ENCODE measurements at regions of chr18 and their contacts with region 1.

Region 1: DNA sequence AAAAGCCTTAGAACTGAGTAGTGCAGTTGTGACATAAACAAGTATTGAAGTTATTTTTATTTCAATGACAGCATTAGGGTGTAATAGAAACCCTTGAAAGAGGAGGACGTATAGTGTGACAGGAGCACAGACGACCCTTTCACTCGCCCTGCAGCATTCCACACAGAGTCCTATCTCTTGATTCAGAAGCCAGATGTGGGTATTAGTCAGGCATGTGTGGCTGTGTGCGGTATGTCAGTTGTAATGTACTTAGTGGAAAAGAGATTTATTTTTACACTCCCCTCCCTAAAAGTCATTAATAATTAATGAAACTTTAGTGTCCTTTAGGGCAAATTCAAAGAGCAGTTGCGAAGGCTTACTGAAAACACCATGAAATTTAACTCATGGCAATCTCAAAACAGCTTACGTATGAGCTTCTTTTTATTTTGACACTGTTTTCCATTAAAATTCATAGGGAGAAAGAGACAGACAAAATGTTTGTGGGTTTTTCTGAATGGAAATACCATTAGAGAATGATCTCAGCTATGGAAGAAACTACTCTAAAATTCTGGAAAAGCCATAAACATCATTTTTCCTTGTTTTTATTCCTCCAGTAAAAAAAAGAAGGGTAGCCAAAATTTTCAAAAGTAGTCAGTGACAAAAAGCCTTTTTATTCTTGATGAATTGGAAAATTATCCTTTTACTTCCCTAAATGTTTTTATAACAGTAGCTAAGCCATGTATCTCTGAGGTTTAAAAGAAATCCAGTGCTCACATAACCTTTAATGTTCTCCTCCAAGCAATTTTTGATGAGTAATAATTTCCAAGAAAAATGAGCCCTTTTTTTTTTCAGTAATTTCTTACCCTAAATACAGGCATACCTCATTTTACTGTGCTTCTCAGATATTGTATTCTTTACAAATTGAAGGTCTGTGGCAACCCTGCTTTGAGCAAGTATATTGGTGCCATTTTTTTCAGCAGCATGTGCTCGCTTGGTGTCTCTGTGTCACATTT is 84.0 kb upstream of the DSEL start:
- DNase-seq: no peak
- ATAC-seq: no peak
- H3K4me3 ChIP-seq: no peak overlapping the region
- H3K4me3 Mint-ChIP-seq: no peak overlapping the region
- H3K27ac ChIP-seq: no peak overlapping the region
- H3K27ac Mint-ChIP-seq: no peak overlapping the region
- H3K4me1 ChIP-seq: no peaks in the 10 kb centered on the region
- H3K4me1 Mint-ChIP-seq: no peaks in the 10 kb centered on the region
- H3K27me3 ChIP-seq: peaks cover 0 to 4% of the 10 kb centered on the region in 2 experiments
- H3K27me3 Mint-ChIP-seq: peaks cover 1 to 2% of the 10 kb centered on the region in 2 donors

Region 2: DNA sequence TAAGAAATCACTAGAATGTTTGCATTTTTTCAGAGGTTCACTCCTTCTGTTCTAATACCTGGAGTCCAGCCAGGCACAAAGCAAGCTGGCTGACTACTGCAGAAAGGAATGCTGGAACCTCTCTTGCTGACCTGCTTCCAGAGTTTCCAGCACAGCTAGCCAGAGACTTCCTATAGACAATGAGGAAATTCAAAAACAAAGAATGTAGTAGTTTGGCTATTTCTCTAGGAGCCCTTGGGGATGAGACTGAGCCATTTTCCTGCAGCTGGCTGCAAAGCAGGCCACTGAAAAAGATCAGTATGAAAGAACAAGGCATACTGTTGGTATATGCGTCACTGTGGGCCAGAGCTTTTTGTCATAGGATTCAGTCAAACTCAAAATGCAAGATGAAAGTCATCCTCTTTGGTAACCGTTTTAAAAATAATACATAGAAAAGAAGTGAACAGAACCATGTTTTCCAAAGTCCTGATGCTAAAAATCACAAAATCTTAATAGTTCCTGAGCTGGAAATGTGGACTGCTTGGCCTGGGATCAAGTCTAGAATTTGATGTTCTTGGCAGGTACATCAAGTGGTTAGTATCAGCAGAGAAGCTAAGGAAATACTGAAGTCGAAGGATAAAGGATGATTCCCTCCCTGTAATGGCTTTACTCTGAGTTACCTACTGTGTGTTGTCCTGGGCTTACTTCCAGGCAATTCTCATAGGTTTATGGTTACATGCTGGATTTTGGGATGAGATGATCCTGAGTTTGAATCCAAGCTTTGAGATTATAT is 75.0 kb before region 1 on chr18:
- CTCF ChIA-PET with region 1: no interaction called
- POLR2A ChIA-PET with region 1: interaction called in 1 of 2 experiments, 13 read pairs
- DNase-seq: no peak
- ATAC-seq: no peak
- H3K4me3 ChIP-seq: no peak overlapping the region
- H3K4me3 Mint-ChIP-seq: no peak overlapping the region
- H3K27ac ChIP-seq: no peak overlapping the region
- H3K27ac Mint-ChIP-seq: no peak overlapping the region
- H3K4me1 ChIP-seq: no peaks in the 10 kb centered on the region
- H3K4me1 Mint-ChIP-seq: no peaks in the 10 kb centered on the region
- H3K27me3 ChIP-seq: peaks cover 0 to 4% of the 10 kb centered on the region in 2 experiments
- H3K27me3 Mint-ChIP-seq: peaks cover 25 to 26% of the 10 kb centered on the region in 2 donors

Measured in T-cell (primary cell).